ENCODE measurements at regions of chr4 and their contacts with region 1.

Region 1: GRCh38 chr4:185039508-185040273 is 21.4 kb downstream of the HELT start:
- DNase-seq: no peak
- ATAC-seq: peak; percentile 91

Region 2: DNA sequence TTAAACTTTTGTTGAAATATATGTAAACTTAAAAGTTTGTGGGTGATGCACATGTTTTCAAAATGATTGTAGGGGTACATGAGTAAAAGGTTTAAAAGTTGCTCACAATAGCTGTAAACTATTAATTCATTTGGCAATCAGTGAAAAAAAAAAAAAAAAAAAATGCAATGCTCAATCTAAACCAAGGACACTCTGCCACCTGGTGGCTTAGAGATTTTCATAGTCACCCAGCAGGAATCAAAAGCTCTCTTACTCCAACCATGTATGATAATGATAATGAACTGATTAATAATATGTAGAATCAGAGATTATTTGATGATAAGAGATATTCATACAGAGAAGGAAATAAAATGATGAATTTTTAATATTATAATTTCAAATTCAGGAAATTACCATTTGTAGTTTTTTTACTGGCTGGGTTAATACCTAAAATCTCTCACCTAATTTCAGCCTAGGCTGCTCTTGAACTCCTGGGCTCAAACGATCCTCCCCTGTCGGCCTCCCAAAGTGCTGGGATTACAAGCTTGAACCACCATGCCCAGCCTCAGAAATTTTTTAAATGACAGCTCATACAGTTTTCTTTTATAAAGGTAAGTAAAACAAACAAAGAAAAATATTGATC is 56.5 kb after region 1 on chr4:
- intact Hi-C with region 1: loop called (anchors 2 kb)
- DNase-seq: no peak
- ATAC-seq: peak; percentile 52

Region 3: GRCh38 chr4:185115827-185116232 is 76.1 kb after region 1 on chr4:
- intact Hi-C with region 1: no loop called
- DNase-seq: peak; percentile 79
- ATAC-seq: peak; percentile 91

Region 4: GRCh38 chr4:185134307-185134869 is 94.7 kb after region 1 on chr4:
- intact Hi-C with region 1: loop called (anchors 2 kb)
- DNase-seq: no peak
- ATAC-seq: peak; percentile 63

Region 5: DNA sequence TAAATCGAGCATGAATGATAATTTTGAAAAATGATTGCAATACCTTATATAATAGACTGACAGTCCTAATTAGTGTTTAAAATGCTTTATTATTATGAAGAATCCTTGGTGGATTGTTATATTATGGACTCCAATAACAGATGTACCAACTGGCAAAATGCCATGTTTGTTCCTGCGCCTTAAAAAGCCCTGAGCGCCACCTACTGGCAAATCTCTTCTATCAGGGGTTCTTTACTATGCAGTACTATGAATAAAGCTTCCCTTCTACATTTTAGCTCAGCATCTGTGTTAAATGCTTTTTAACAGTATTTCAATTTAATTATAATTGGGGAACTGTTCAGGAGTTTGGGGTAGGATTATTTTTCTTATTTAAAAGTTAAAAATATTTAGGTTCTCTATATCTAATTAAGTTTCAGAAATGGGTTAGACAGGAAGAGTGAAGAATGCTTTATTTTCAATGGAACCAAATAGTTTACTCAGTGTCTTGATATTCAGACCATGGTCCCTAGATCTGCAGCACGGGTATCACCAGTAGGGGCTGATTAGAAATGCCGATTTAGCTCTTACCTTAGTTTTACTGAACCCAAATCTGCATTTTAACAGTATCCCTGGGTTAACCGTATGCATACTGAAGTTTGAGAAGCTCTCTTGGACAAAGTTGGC is 144.1 kb after region 1 on chr4:
- intact Hi-C with region 1: loop called (anchors 5 kb)
- DNase-seq: no peak
- ATAC-seq: peak; percentile 85

Measured in Right ventricle myocardium superior (tissue), 1 donor.